Common myeloid progenitor, CD34-positive (primary cell): ENCODE measurements at regions of chr1 and their contacts with region 1.

Region 1: GRCh38 chr1:48202030-48202752 is 20.3 kb upstream of the SLC5A9 start:
- DNase-seq: peak; percentile 57 to 78 (median 73)
- H3K4me3 ChIP-seq: no peak overlapping the region
- H3K27ac ChIP-seq: no peak overlapping the region
- H3K4me1 ChIP-seq: no peaks in the 10 kb centered on the region
- H3K27me3 ChIP-seq: no peaks in the 10 kb centered on the region

Region 2: GRCh38 chr1:47934243-47934805 is 267.9 kb before region 1 on chr1:
- CTCF ChIA-PET with region 1: no interaction called
- POLR2A ChIA-PET with region 1: no interaction called
- DNase-seq: no peak
- H3K4me3 ChIP-seq: no peak overlapping the region
- H3K27ac ChIP-seq: no peak overlapping the region
- H3K4me1 ChIP-seq: no peaks in the 10 kb centered on the region
- H3K27me3 ChIP-seq: peaks cover 0 to 4% (median 0%) of the 10 kb centered on the region in 5 experiments

Region 3: DNA sequence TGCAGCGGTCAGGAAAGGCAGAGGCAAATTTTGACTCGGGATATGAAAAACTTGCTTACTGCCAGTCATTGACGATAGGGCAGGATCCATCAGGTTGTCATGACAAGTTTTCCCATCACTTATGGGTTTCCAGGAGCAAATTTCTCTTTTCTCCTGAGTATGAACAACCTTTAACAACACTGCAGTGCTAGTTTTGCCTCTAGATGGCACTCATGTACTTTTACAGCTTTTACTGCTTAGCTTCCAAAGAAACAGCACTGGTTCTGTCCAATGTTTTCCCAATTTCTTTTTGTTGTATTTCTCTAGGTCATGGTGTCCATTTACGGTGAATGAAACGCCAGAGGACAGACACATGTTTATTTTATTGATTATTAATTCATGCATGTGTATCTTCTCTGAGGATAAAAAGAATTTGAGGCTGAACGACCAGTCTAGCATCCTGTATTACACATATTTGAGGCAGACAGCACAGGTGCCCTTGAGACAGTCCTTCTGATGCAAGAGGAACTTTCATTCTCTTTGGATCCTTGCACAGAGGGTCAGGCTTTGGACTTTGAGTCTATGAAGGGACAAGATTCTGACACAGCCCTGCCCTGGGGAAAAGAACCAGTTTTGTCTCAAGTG is 92.7 kb before region 1 on chr1:
- CTCF ChIA-PET with region 1: interaction called, 105 read pairs
- POLR2A ChIA-PET with region 1: no interaction called
- DNase-seq: peak; percentile 43 to 66 (median 56)
- H3K4me3 ChIP-seq: no peak overlapping the region
- H3K27ac ChIP-seq: no peak overlapping the region
- H3K4me1 ChIP-seq: no peaks in the 10 kb centered on the region
- H3K27me3 ChIP-seq: peaks cover 0 to 2% (median 0%) of the 10 kb centered on the region in 5 experiments

Region 4: GRCh38 chr1:48236716-48237470 is 34.7 kb after region 1 on chr1:
- CTCF ChIA-PET with region 1: interaction called, 10 read pairs
- POLR2A ChIA-PET with region 1: no interaction called
- DNase-seq: peak; percentile 35 to 68 (median 62)
- H3K4me3 ChIP-seq: no peak overlapping the region
- H3K27ac ChIP-seq: no peak overlapping the region
- H3K4me1 ChIP-seq: peaks cover 0 to 3% (median 1%) of the 10 kb centered on the region in 4 experiments
- H3K27me3 ChIP-seq: no peaks in the 10 kb centered on the region